Heart left ventricle (tissue), 16 donors: ENCODE measurements at regions of chr15 and their contacts with region 1.

Region 1: DNA sequence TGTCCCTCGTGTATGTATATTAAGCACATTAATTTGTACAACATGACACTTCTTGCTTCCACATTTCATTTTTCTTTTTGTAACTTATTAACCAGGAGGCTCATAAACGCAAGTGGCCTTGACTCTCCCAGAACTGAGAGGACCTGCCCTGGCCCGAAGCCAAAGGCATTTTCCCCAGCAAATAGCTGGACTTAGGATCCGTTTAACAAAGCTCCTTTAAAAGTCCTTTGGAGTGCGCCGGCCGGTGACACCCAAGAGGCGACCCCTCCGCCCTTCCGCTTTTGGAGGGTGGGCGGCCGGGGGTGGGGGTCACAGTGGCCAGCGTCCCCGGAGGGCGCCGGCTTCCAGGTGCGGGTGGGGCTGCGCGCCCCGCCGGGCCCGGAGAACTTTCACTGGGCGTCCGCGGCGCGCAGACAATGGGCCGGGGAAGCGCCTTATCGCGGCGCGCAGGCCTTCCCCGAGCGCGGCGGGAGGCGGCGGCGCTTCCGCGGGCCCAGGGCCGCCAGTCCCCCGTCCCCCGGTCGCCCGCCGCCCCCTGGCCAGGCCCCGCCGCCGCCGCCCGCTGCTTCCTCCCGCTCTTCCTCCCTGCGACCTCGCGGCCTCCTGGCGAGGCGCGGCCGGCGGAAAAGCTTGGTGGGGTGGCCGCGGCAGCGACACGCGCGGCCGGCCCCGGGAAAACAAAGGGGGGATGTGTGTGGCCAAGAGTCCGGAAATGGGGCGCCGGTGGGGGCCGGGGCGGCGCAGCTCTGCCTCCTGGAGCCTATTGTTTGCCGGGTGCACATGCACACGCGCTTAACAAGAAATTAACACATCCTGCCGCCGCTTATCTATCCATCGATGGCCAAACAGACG is 613.4 kb downstream of the MCTP2 start:
- DNase-seq: peak; percentile 71 to 88 (median 80)
- ATAC-seq: peak; percentile 85 to 95 (median 92)
- H3K4me3 ChIP-seq: peak overlapping the region in 10 of 12 donors; percentile 30 to 57 (median 42)
- H3K27ac ChIP-seq: peak overlapping the region; percentile 15 to 79 (median 62)
- H3K4me1 ChIP-seq: peaks cover 0 to 19% (median 4%) of the 10 kb centered on the region in 12 donors
- H3K27me3 ChIP-seq: peaks cover 0 to 20% (median 0%) of the 10 kb centered on the region in 9 donors
- CTCF ChIP-seq: peak in 5 of 12 donors; percentile 12 to 39 (median 24)
- POLR2A ChIP-seq: no peak

Region 2: GRCh38 chr15:93553167-93553935 is 1291.4 kb before region 1 on chr15:
- intact Hi-C with region 1: no loop called
- DNase-seq: no peak
- ATAC-seq: no peak
- H3K4me3 ChIP-seq: no peak overlapping the region
- H3K27ac ChIP-seq: no peak overlapping the region
- H3K4me1 ChIP-seq: no peaks in the 10 kb centered on the region
- H3K27me3 ChIP-seq: no peaks in the 10 kb centered on the region
- CTCF ChIP-seq: no peak
- POLR2A ChIP-seq: no peak

Region 3: GRCh38 chr15:94509259-94509658 is 335.5 kb before region 1 on chr15:
- intact Hi-C with region 1: no loop called
- DNase-seq: no peak
- ATAC-seq: no peak
- H3K4me3 ChIP-seq: no peak overlapping the region
- H3K27ac ChIP-seq: no peak overlapping the region
- H3K4me1 ChIP-seq: no peaks in the 10 kb centered on the region
- H3K27me3 ChIP-seq: no peaks in the 10 kb centered on the region
- CTCF ChIP-seq: no peak
- POLR2A ChIP-seq: no peak

Region 4: DNA sequence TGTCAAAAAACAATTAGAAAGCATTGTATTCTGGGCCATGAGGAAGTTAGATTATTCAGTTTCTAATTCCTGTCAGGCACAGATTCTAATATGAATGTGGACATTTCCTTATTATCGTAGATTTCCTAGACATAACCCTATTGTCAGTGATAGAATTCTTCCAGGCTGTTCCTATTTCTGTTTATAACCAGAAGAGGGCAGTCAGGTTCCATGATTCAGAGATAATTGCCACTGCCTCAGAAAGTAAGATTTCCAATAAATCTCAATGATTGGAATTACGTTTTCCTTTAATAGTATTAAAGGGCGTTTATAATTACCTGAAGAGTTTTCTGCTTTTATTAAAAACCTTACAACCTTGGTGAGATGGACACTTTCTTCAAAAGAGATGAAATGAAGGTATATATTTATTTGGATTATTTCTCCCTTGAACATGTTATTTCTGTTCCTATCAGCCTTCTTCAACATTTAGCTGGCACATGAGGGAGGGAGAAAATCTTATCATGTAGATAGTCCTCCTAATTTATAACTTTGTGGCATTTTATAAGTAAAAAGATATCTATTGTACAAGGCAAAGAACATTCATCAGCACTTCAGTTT is 174.2 kb before region 1 on chr15:
- intact Hi-C with region 1: loop called in 2 of 10 experiments (anchors 5 to 10 kb)
- DNase-seq: no peak
- ATAC-seq: peak in 2 of 4 donors; percentile 52 to 54
- H3K4me3 ChIP-seq: no peak overlapping the region
- H3K27ac ChIP-seq: peak overlapping the region in 2 of 12 donors; percentile 6 to 21
- H3K4me1 ChIP-seq: peaks cover 0 to 15% (median 5%) of the 10 kb centered on the region in 12 donors
- H3K27me3 ChIP-seq: peaks cover 0 to 7% (median 0%) of the 10 kb centered on the region in 9 donors
- CTCF ChIP-seq: peak; percentile 63 to 86 (median 72)
- POLR2A ChIP-seq: no peak

Region 5: DNA sequence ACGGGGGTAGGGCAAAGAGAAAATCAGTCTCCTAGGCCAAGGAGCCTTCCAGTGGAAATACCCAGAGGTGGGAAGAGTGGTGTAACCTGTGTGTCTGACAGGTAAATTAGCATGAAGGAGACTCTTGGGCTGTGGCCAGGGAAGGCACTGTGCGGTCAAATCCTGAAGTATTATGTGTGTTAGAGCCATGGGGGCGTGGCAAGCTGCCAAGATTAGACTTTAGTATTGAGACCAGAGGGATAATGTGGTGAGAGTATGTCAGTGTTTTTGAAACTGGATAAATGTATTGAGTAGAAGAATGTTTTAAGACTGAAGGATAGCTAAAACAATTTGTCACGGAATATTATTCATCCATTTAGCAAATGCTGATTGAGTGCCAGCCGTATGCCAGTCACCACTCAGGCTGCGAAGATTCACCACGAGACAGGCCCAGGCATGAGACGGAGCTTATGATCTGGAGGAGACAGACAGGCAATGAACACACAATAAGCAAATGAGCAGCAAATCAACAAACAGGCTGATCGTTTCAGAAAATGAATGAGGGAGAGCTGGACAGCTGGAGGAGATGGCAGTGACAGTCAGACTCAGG is 167.5 kb before region 1 on chr15:
- intact Hi-C with region 1: loop called in 3 of 10 experiments (anchors 5 to 10 kb)
- DNase-seq: no peak
- ATAC-seq: no peak
- H3K4me3 ChIP-seq: no peak overlapping the region
- H3K27ac ChIP-seq: no peak overlapping the region
- H3K4me1 ChIP-seq: peaks cover 0 to 4% (median 0%) of the 10 kb centered on the region in 12 donors
- H3K27me3 ChIP-seq: peaks cover 0 to 6% (median 0%) of the 10 kb centered on the region in 9 donors
- CTCF ChIP-seq: no peak
- POLR2A ChIP-seq: no peak

Region 6: DNA sequence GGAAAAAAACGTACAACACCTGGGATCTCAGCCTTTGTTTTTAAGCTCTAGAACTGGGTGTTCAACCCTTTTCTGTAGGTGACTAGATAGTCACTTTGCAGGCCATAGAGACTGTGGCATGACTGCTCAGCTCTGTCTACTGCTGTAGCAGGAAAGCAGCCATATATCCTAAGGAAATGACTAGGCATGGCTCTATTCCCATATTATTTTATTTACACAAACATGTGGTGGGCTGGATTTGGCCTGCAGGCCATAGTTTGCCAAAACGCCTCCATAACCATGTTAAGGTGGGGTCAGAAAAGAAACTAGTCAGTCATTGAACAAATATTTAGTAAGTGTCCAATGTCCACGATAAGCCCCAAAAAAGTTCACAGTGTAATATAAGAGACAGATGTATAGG is 160.9 kb before region 1 on chr15:
- intact Hi-C with region 1: loop called in 3 of 10 experiments (anchors 5 to 10 kb)
- DNase-seq: no peak
- ATAC-seq: no peak
- H3K4me3 ChIP-seq: no peak overlapping the region
- H3K27ac ChIP-seq: no peak overlapping the region
- H3K4me1 ChIP-seq: no peaks in the 10 kb centered on the region
- H3K27me3 ChIP-seq: peaks cover 0 to 4% (median 0%) of the 10 kb centered on the region in 9 donors
- CTCF ChIP-seq: no peak
- POLR2A ChIP-seq: no peak

Region 7: GRCh38 chr15:94703596-94703995 is 141.2 kb before region 1 on chr15:
- intact Hi-C with region 1: loop called in 1 of 10 experiments (anchors 2 kb)
- DNase-seq: no peak
- ATAC-seq: no peak
- H3K4me3 ChIP-seq: no peak overlapping the region
- H3K27ac ChIP-seq: no peak overlapping the region
- H3K4me1 ChIP-seq: peaks cover 0 to 3% (median 0%) of the 10 kb centered on the region in 12 donors
- H3K27me3 ChIP-seq: no peaks in the 10 kb centered on the region
- CTCF ChIP-seq: no peak
- POLR2A ChIP-seq: no peak

Region 8: DNA sequence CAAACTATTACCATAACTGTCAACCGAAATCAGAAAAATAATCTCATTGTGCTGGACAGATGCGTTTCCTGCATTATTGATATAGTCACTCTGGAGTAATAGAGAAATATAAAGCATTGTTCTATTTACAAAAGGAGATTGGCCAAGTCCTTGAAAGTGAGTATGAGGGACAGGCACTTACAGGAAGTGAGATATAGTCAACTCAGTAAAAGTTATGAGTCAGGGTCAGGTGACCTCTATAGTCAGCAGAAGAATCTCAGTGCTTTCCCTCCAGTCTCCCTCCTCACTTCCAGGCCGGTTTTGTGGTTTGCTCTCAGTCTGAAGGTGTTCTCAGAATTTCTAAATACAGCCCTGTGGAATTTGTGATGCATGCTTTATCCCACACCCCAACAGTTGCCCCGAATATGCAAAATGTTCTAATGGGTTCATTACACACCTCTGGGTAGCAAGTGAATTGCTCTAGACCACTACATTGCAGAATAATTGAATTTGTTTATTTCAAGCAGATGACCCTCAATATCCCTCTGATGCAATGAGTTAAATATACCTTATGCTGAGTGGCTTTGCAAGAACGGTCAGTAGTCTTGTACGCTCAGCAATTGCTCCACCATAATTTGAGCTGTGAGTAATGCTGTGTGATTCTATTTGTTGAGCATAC is 174.3 kb after region 1 on chr15:
- intact Hi-C with region 1: loop called in 2 of 10 experiments (anchors 1 kb)
- DNase-seq: no peak
- ATAC-seq: peak in 3 of 4 donors; percentile 63 to 78 (median 73)
- H3K4me3 ChIP-seq: no peak overlapping the region
- H3K27ac ChIP-seq: peak overlapping the region in 4 of 12 donors; percentile 3 to 24 (median 18)
- H3K4me1 ChIP-seq: peaks cover 0 to 34% (median 22%) of the 10 kb centered on the region in 12 donors
- H3K27me3 ChIP-seq: no peaks in the 10 kb centered on the region
- CTCF ChIP-seq: no peak
- POLR2A ChIP-seq: no peak